Left lung (tissue), 14 donors: ENCODE measurements at regions of chr3 and their contacts with region 1.

Region 1: GRCh38 chr3:42880601-42881451 is 5.1 kb upstream of the CYP8B1 start:
- DNase-seq: peak; percentile 79 to 95 (median 88)
- ATAC-seq: peak; percentile 100
- H3K4me3 ChIP-seq: peak overlapping the region; percentile 50 to 60
- H3K27ac ChIP-seq: peak overlapping the region; percentile 24 to 45
- H3K4me1 ChIP-seq: peaks cover 0 to 12% of the 10 kb centered on the region in 2 donors
- H3K27me3 ChIP-seq: peaks cover 0 to 13% of the 10 kb centered on the region in 2 donors
- CTCF ChIP-seq: peak; percentile 90 to 91

Region 2: DNA sequence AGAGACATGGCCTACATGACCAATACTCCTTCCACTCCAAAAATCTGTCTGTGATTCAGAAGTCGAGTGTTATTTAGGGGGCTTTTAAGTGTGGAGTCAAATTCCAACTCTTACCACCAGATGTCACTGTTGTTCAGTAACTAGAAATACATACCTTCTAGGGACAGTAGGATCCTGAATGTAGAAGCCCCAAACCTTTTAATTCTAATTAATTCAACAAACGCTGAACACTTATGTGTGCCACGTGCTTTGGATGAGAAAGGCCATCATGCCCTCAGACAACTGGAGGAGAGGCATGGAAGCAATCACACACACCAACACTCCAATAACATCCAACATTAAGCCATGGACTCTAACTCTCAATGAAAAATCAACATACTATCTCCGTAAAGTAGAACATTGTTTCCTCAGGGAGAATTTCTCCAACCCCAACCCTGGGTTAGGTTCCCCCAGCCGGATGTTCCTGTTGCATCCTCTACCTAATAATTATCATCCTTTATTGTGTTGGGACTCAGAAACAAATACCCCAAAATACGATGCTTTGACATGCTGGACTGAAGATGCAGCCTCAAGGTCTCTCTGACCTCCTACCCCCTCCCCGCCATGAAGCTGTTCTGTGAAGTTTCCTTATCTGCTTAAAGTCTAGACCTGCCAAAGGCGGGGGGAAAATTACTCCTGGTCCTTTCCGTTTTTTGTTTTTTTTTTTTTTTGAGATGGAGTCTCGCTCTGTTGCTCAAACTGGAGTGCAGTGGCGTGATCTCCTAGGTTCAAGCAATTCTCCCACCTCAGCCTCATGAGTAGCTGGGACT is 99.7 kb before region 1 on chr3:
- intact Hi-C with region 1: loop called in 1 of 2 experiments (anchors 2 kb)
- DNase-seq: peak in 2 of 4 donors; percentile 69 to 79
- ATAC-seq: peak; percentile 82
- H3K4me3 ChIP-seq: no peak overlapping the region
- H3K27ac ChIP-seq: no peak overlapping the region
- H3K4me1 ChIP-seq: peaks cover 4 to 16% of the 10 kb centered on the region in 2 donors
- H3K27me3 ChIP-seq: no peaks in the 10 kb centered on the region
- CTCF ChIP-seq: peak; percentile 73 to 80

Region 3: GRCh38 chr3:42831321-42831713 is 49.5 kb before region 1 on chr3:
- intact Hi-C with region 1: loop called in 1 of 2 experiments (anchors 5 kb)
- DNase-seq: peak in 3 of 4 donors; percentile 35 to 58 (median 56)
- ATAC-seq: peak; percentile 91
- H3K4me3 ChIP-seq: no peak overlapping the region
- H3K27ac ChIP-seq: no peak overlapping the region
- H3K4me1 ChIP-seq: peaks cover 0 to 6% of the 10 kb centered on the region in 2 donors
- H3K27me3 ChIP-seq: no peaks in the 10 kb centered on the region
- CTCF ChIP-seq: peak; percentile 73 to 83

Region 4: GRCh38 chr3:42991341-42992315 is 110.8 kb after region 1 on chr3:
- intact Hi-C with region 1: no loop called
- DNase-seq: no peak
- ATAC-seq: no peak
- H3K4me3 ChIP-seq: no peak overlapping the region
- H3K27ac ChIP-seq: no peak overlapping the region
- H3K4me1 ChIP-seq: no peaks in the 10 kb centered on the region
- H3K27me3 ChIP-seq: no peaks in the 10 kb centered on the region
- CTCF ChIP-seq: no peak